ENCODE measurements at regions of chr12 and their contacts with region 1.

Region 1: GRCh38 chr12:63668028-63668799 is at the start of gene DPY19L2:
- DNase-seq: peak; percentile 56 to 87 (median 78)
- H3K4me3 ChIP-seq: peak within 1 kb of the TSS; percentile 49 to 95 (median 73)
- H3K27ac ChIP-seq: peak within 1 kb of the TSS in 55 of 59 donors; percentile 10 to 96 (median 81)
- H3K27me3 ChIP-seq: no peaks in the 10 kb centered on the region
- CTCF ChIP-seq: peak in 2 of 56 donors; percentile 1 to 10
- total RNA-seq, gene DPY19L2: 13.0 to 73.3 (median 30.3) TPM

Region 2: GRCh38 chr12:63795944-63796343 is 127.7 kb after region 1 on chr12:
- intact Hi-C with region 1: loop called (anchors 5 to 10 kb)
- DNase-seq: no peak
- H3K4me3 ChIP-seq: no peak overlapping the region
- H3K27ac ChIP-seq: no peak overlapping the region
- H3K27me3 ChIP-seq: no peaks in the 10 kb centered on the region
- CTCF ChIP-seq: no peak

Region 3: GRCh38 chr12:63802012-63802608 is 133.9 kb after region 1 on chr12:
- intact Hi-C with region 1: loop called (anchors 5 to 10 kb)
- DNase-seq: no peak
- H3K4me3 ChIP-seq: no peak overlapping the region
- H3K27ac ChIP-seq: no peak overlapping the region
- H3K27me3 ChIP-seq: no peaks in the 10 kb centered on the region
- CTCF ChIP-seq: peak; percentile 64 to 93 (median 78)

Region 4: GRCh38 chr12:64203036-64203435 is 534.8 kb after region 1 on chr12:
- intact Hi-C with region 1: no loop called
- DNase-seq: no peak
- H3K4me3 ChIP-seq: no peak overlapping the region
- H3K27ac ChIP-seq: no peak overlapping the region
- H3K27me3 ChIP-seq: no peaks in the 10 kb centered on the region
- CTCF ChIP-seq: no peak

Measured in dorsolateral prefrontal cortex (tissue), 120 donors.